A673 (cell line): ENCODE measurements at regions of chr20 and their contacts with region 1.

Region 1: GRCh38 chr20:645318-646106 is 7.5 kb downstream of the SRXN1 start:
- DNase-seq: peak; percentile 79
- H3K4me3 ChIP-seq: no peak overlapping the region
- H3K27ac ChIP-seq: no peak overlapping the region
- H3K4me1 ChIP-seq: no peaks in the 10 kb centered on the region
- H3K27me3 ChIP-seq: no peaks in the 10 kb centered on the region
- CTCF ChIP-seq: peak; percentile 97

Region 2: DNA sequence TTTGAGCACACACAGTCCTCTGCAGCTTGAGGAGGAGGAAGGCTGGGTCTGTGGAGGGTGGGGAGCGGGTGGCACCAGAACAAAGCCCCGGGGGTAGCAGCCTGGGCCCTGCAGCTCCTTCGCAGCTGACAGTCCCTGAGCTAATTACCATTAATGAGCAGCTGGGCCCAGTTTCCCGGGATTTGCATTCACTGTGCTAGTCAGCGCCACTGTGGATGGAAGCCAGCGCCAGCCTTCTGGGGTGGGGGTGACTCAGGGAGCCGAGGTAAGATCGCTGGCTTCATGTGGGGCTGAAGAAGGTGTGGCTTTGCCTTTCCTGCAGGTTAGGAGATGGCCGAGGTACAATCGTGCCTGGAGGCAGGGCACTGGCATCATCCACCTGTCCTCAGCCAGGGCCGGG is 11.0 kb before region 1 on chr20:
- CTCF ChIA-PET with region 1: no interaction called
- POLR2A ChIA-PET with region 1: no interaction called
- intact Hi-C with region 1: no loop called
- DNase-seq: no peak
- H3K4me3 ChIP-seq: no peak overlapping the region
- H3K27ac ChIP-seq: no peak overlapping the region
- H3K4me1 ChIP-seq: no peaks in the 10 kb centered on the region
- H3K27me3 ChIP-seq: no peaks in the 10 kb centered on the region
- CTCF ChIP-seq: no peak

Region 3: GRCh38 chr20:831251-831650 is 185.7 kb after region 1 on chr20:
- CTCF ChIA-PET with region 1: interaction called, 12 read pairs
- POLR2A ChIA-PET with region 1: no interaction called
- intact Hi-C with region 1: no loop called
- DNase-seq: no peak
- H3K4me3 ChIP-seq: no peak overlapping the region
- H3K27ac ChIP-seq: no peak overlapping the region
- H3K4me1 ChIP-seq: peaks cover 15% of the 10 kb centered on the region
- H3K27me3 ChIP-seq: no peaks in the 10 kb centered on the region
- CTCF ChIP-seq: no peak